B cell (primary cell): ENCODE measurements at regions of chr1 and their contacts with region 1.

Region 1: GRCh38 chr1:22077728-22078127 is 25.2 kb downstream of the CDC42 start:
- DNase-seq: no peak
- ATAC-seq: no peak
- H3K4me3 ChIP-seq: no peak overlapping the region
- H3K4me3 Mint-ChIP-seq: peak overlapping the region; percentile 35
- H3K27ac ChIP-seq: peak overlapping the region in 1 of 2 donors; percentile 17
- H3K27ac Mint-ChIP-seq: no peak overlapping the region
- H3K4me1 ChIP-seq: peaks cover 55 to 63% of the 10 kb centered on the region in 2 donors
- H3K4me1 Mint-ChIP-seq: peaks cover 78% of the 10 kb centered on the region
- H3K27me3 ChIP-seq: no peaks in the 10 kb centered on the region
- H3K27me3 Mint-ChIP-seq: no peaks in the 10 kb centered on the region
- CTCF ChIP-seq: no peak

Region 2: GRCh38 chr1:21904704-21905520 is 172.8 kb before region 1 on chr1:
- CTCF ChIA-PET with region 1: no interaction called
- POLR2A ChIA-PET with region 1: no interaction called
- intact Hi-C with region 1: no loop called
- DNase-seq: no peak
- ATAC-seq: no peak
- H3K4me3 ChIP-seq: no peak overlapping the region
- H3K4me3 Mint-ChIP-seq: no peak overlapping the region
- H3K27ac ChIP-seq: no peak overlapping the region
- H3K27ac Mint-ChIP-seq: no peak overlapping the region
- H3K4me1 ChIP-seq: peaks cover 7 to 11% of the 10 kb centered on the region in 2 donors
- H3K4me1 Mint-ChIP-seq: peaks cover 13% of the 10 kb centered on the region
- H3K27me3 ChIP-seq: no peaks in the 10 kb centered on the region
- H3K27me3 Mint-ChIP-seq: peaks cover 11% of the 10 kb centered on the region
- CTCF ChIP-seq: no peak

Region 3: GRCh38 chr1:22089787-22090186 is 12.1 kb after region 1 on chr1:
- CTCF ChIA-PET with region 1: interaction called, 3 read pairs
- POLR2A ChIA-PET with region 1: no interaction called
- intact Hi-C with region 1: loop called (anchors 2 kb)
- DNase-seq: no peak
- ATAC-seq: no peak
- H3K4me3 ChIP-seq: peak overlapping the region in 2 of 5 experiments; percentile 13
- H3K4me3 Mint-ChIP-seq: peak overlapping the region; percentile 70
- H3K27ac ChIP-seq: peak overlapping the region; percentile 11 to 69
- H3K27ac Mint-ChIP-seq: peak overlapping the region; percentile 11
- H3K4me1 ChIP-seq: peaks cover 43 to 48% of the 10 kb centered on the region in 2 donors
- H3K4me1 Mint-ChIP-seq: peaks cover 74% of the 10 kb centered on the region
- H3K27me3 ChIP-seq: no peaks in the 10 kb centered on the region
- H3K27me3 Mint-ChIP-seq: no peaks in the 10 kb centered on the region
- CTCF ChIP-seq: no peak

Region 4: DNA sequence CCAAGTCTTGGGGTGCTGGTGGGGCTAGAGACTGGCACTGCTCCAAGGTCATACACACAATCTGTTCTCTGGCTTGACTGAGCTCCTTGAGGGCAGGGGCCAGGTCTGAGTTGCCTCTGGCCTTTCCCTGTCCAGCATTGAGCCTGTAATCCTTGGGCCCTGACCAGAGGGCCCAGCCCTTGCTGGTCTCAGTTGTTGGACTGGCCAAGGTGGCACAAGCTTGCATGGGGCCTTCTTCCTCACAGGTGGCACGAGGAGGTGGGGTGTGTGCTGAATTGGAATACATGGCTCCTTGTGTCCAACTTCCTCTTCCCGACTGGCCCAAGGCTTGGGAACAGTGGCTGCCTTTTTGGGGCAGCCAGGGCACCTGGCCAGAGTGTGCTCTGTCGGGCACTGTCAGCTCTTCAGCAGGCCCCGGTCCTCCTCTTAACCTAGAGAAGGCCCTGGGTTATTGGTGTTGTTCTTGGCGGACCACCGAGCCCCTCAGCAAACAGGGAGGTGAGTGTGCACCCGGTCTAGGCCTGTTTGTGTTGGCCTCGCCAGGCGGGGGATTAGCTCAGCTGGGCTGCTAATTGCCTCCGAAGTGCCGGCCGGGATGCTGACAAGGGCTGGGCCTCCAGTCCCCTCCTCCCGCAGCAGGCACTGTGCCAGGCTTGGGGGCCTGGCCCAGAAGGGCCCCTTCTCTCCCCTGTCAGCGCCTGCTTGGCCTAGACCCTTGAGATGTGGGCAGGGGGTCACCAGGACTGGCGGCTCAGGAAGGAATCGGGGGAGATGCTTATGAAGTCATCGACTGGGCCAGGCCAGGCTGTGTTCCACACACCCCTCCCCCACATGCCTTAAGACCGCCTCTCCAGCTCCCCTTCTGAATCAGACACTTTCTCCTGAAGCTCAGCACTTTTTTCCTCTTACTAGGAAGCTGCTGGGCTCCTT is 36.6 kb after region 1 on chr1:
- CTCF ChIA-PET with region 1: no interaction called
- POLR2A ChIA-PET with region 1: no interaction called
- intact Hi-C with region 1: no loop called
- DNase-seq: no peak
- ATAC-seq: no peak
- H3K4me3 ChIP-seq: no peak overlapping the region
- H3K4me3 Mint-ChIP-seq: no peak overlapping the region
- H3K27ac ChIP-seq: peak overlapping the region in 1 of 2 donors; percentile 47
- H3K27ac Mint-ChIP-seq: peak overlapping the region; percentile 53
- H3K4me1 ChIP-seq: peaks cover 43 to 54% of the 10 kb centered on the region in 2 donors
- H3K4me1 Mint-ChIP-seq: peaks cover 57% of the 10 kb centered on the region
- H3K27me3 ChIP-seq: no peaks in the 10 kb centered on the region
- H3K27me3 Mint-ChIP-seq: no peaks in the 10 kb centered on the region
- CTCF ChIP-seq: no peak

Region 5: GRCh38 chr1:22420455-22421053 is 342.8 kb after region 1 on chr1:
- CTCF ChIA-PET with region 1: no interaction called
- POLR2A ChIA-PET with region 1: no interaction called
- intact Hi-C with region 1: no loop called
- DNase-seq: peak; percentile 51
- ATAC-seq: peak; percentile 51
- H3K4me3 ChIP-seq: no peak overlapping the region
- H3K4me3 Mint-ChIP-seq: no peak overlapping the region
- H3K27ac ChIP-seq: no peak overlapping the region
- H3K27ac Mint-ChIP-seq: no peak overlapping the region
- H3K4me1 ChIP-seq: peaks cover 4 to 14% of the 10 kb centered on the region in 2 donors
- H3K4me1 Mint-ChIP-seq: peaks cover 11% of the 10 kb centered on the region
- H3K27me3 ChIP-seq: peaks cover 0 to 30% (median 12%) of the 10 kb centered on the region in 4 experiments
- H3K27me3 Mint-ChIP-seq: peaks cover 52% of the 10 kb centered on the region
- CTCF ChIP-seq: peak; percentile 31